Activated T-helper 1 cell treated with anti-CD3 and anti-CD28 coated beads, Interleukin-12 subunit alpha, Interleukin-12 subunit beta, Interleukin-2, Interleukin-4 antibody, amounts not matched to agents 30 ng/mL and 10 ng/mL and 1 ng/mL, durations not matched to agents 14 hours and 24 hours and 36 hours (primary cell): ENCODE measurements at regions of chr3 and their contacts with region 1.

Region 1: DNA sequence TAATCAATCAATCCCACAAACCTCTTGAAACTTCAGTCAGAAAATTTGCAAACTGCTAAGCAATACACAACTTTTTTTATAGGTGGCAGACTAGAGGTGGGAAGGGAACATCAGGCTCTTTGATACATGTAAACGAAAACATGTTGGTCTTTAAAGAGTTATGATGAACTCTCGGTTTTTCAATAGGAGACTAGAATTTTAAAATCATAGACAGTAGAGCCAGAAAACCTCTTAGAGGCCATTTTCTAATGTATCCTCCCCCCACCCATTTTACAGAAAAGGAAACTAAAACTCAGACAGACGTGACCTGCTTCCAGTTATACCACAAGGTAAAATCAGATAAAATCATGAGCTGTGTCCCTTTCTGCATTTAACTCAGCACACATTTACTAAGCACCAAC is 179.1 kb upstream of the LPP start:
- DNase-seq: no peak
- H3K4me3 Mint-ChIP-seq: peak overlapping the region; percentile 59
- H3K27ac Mint-ChIP-seq: peak overlapping the region; percentile 94
- H3K4me1 Mint-ChIP-seq: peaks cover 62% of the 10 kb centered on the region
- H3K27me3 Mint-ChIP-seq: peaks cover 2% of the 10 kb centered on the region

Region 2: GRCh38 chr3:187929112-187929816 is 45.6 kb before region 1 on chr3:
- intact Hi-C with region 1: loop called (anchors 1 kb)
- DNase-seq: no peak
- H3K4me3 Mint-ChIP-seq: peak overlapping the region; percentile 11
- H3K27ac Mint-ChIP-seq: peak overlapping the region; percentile 88
- H3K4me1 Mint-ChIP-seq: peaks cover 45% of the 10 kb centered on the region
- H3K27me3 Mint-ChIP-seq: no peaks in the 10 kb centered on the region

Region 3: GRCh38 chr3:187986514-187986934 is 11.7 kb after region 1 on chr3:
- intact Hi-C with region 1: loop called (anchors 1 kb)
- DNase-seq: peak; percentile 34
- H3K4me3 Mint-ChIP-seq: peak overlapping the region; percentile 21
- H3K27ac Mint-ChIP-seq: peak overlapping the region; percentile 82
- H3K4me1 Mint-ChIP-seq: peaks cover 70% of the 10 kb centered on the region
- H3K27me3 Mint-ChIP-seq: no peaks in the 10 kb centered on the region

Region 4: GRCh38 chr3:188170461-188171459 is 195.9 kb after region 1 on chr3:
- intact Hi-C with region 1: loop called (anchors 2 kb)
- DNase-seq: no peak
- H3K4me3 Mint-ChIP-seq: peak overlapping the region; percentile 9
- H3K27ac Mint-ChIP-seq: peak overlapping the region; percentile 49
- H3K4me1 Mint-ChIP-seq: peaks cover 52% of the 10 kb centered on the region
- H3K27me3 Mint-ChIP-seq: no peaks in the 10 kb centered on the region

Region 5: GRCh38 chr3:188294823-188295487 is 320.1 kb after region 1 on chr3:
- intact Hi-C with region 1: loop called (anchors 1 kb)
- DNase-seq: no peak
- H3K4me3 Mint-ChIP-seq: no peak overlapping the region
- H3K27ac Mint-ChIP-seq: peak overlapping the region; percentile 33
- H3K4me1 Mint-ChIP-seq: peaks cover 86% of the 10 kb centered on the region
- H3K27me3 Mint-ChIP-seq: no peaks in the 10 kb centered on the region